Activated CD4-positive, alpha-beta memory T cell treated with anti-CD3 and anti-CD28 coated beads, Interleukin-2, amount 10 ng/mL, durations not matched to agents 7 days and 5 days (primary cell): ENCODE measurements at regions of chr2 and their contacts with region 1.

Region 1: GRCh38 chr2:216519154-216519762 is 20.6 kb downstream of the RPL37A start:
- DNase-seq: peak; percentile 50
- H3K4me3 Mint-ChIP-seq: no peak overlapping the region
- H3K27ac Mint-ChIP-seq: no peak overlapping the region
- H3K4me1 Mint-ChIP-seq: no peaks in the 10 kb centered on the region
- H3K27me3 Mint-ChIP-seq: no peaks in the 10 kb centered on the region

Region 2: DNA sequence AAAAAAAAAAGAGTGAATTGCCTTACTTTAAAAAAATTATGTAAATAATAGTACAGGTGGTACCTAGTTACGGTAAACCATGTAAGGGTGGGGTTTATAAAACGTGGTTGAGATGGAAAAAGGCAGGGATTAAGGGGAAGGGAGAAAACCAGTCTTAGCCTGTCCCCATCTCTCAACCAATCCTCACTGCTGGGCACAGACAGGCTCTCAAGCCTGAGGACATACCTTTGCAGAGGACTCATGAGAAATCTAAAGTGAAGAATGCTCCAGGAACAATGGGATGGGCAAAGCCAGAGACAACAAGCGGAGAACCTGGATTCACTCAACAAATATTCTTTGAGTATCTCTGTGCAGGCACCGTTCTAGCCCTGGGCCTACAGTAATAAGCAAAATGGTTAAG is 110.5 kb after region 1 on chr2:
- CTCF ChIA-PET with region 1: no interaction called
- POLR2A ChIA-PET with region 1: no interaction called
- DNase-seq: no peak
- H3K4me3 Mint-ChIP-seq: no peak overlapping the region
- H3K27ac Mint-ChIP-seq: no peak overlapping the region
- H3K4me1 Mint-ChIP-seq: peaks cover 10% of the 10 kb centered on the region
- H3K27me3 Mint-ChIP-seq: peaks cover 51% of the 10 kb centered on the region

Region 3: GRCh38 chr2:216666461-216667233 is 147.4 kb after region 1 on chr2:
- CTCF ChIA-PET with region 1: interaction called, 99 read pairs
- POLR2A ChIA-PET with region 1: interaction called, 3 read pairs
- DNase-seq: peak; percentile 72
- H3K4me3 Mint-ChIP-seq: no peak overlapping the region
- H3K27ac Mint-ChIP-seq: no peak overlapping the region
- H3K4me1 Mint-ChIP-seq: no peaks in the 10 kb centered on the region
- H3K27me3 Mint-ChIP-seq: peaks cover 12% of the 10 kb centered on the region